ENCODE measurements at regions of chr18 and their contacts with region 1.

Region 1: GRCh38 chr18:7566567-7567473 is at the start of gene PTPRM:
- DNase-seq: peak; percentile 79
- H3K4me3 Mint-ChIP-seq: peak within 1 kb of the TSS; percentile 81
- H3K27ac Mint-ChIP-seq: peak within 1 kb of the TSS; percentile 59
- H3K4me1 Mint-ChIP-seq: peaks cover 35% of the 10 kb centered on the region
- H3K27me3 Mint-ChIP-seq: no peaks in the 10 kb centered on the region
- CTCF ChIP-seq: peak; percentile 45
- total RNA-seq, gene PTPRM: 82.8 and 107 TPM in 2 replicates

Region 2: GRCh38 chr18:7221424-7222155 is 345.2 kb before region 1 on chr18:
- CTCF ChIA-PET with region 1: interaction called, 5 read pairs
- POLR2A ChIA-PET with region 1: interaction called, 3 read pairs
- intact Hi-C with region 1: loop called (anchors 1 kb)
- DNase-seq: peak; percentile 80
- H3K4me3 Mint-ChIP-seq: no peak overlapping the region
- H3K27ac Mint-ChIP-seq: no peak overlapping the region
- H3K4me1 Mint-ChIP-seq: no peaks in the 10 kb centered on the region
- H3K27me3 Mint-ChIP-seq: peaks cover 25% of the 10 kb centered on the region
- CTCF ChIP-seq: peak; percentile 83

Region 3: GRCh38 chr18:7417742-7418141 is 149.1 kb before region 1 on chr18:
- CTCF ChIA-PET with region 1: interaction called, 17 read pairs
- POLR2A ChIA-PET with region 1: interaction called, 20 read pairs
- intact Hi-C with region 1: no loop called
- DNase-seq: peak; percentile 95
- H3K4me3 Mint-ChIP-seq: peak overlapping the region; percentile 9
- H3K27ac Mint-ChIP-seq: peak overlapping the region; percentile 68
- H3K4me1 Mint-ChIP-seq: peaks cover 41% of the 10 kb centered on the region
- H3K27me3 Mint-ChIP-seq: no peaks in the 10 kb centered on the region
- CTCF ChIP-seq: no peak

Region 4: GRCh38 chr18:7429831-7430230 is 137.0 kb before region 1 on chr18:
- CTCF ChIA-PET with region 1: no interaction called
- POLR2A ChIA-PET with region 1: no interaction called
- intact Hi-C with region 1: no loop called
- DNase-seq: no peak
- H3K4me3 Mint-ChIP-seq: no peak overlapping the region
- H3K27ac Mint-ChIP-seq: no peak overlapping the region
- H3K4me1 Mint-ChIP-seq: no peaks in the 10 kb centered on the region
- H3K27me3 Mint-ChIP-seq: no peaks in the 10 kb centered on the region
- CTCF ChIP-seq: no peak

Region 5: GRCh38 chr18:7452331-7452730 is 114.5 kb before region 1 on chr18:
- CTCF ChIA-PET with region 1: interaction called, 7 read pairs
- POLR2A ChIA-PET with region 1: no interaction called
- intact Hi-C with region 1: loop called (anchors 10 kb)
- DNase-seq: peak; percentile 72
- H3K4me3 Mint-ChIP-seq: no peak overlapping the region
- H3K27ac Mint-ChIP-seq: no peak overlapping the region
- H3K4me1 Mint-ChIP-seq: no peaks in the 10 kb centered on the region
- H3K27me3 Mint-ChIP-seq: no peaks in the 10 kb centered on the region
- CTCF ChIP-seq: peak; percentile 53

Region 6: GRCh38 chr18:7946734-7947377 is 380.0 kb after region 1 on chr18:
- CTCF ChIA-PET with region 1: no interaction called
- POLR2A ChIA-PET with region 1: interaction called, 5 read pairs
- intact Hi-C with region 1: loop called (anchors 10 kb)
- DNase-seq: peak; percentile 60
- H3K4me3 Mint-ChIP-seq: peak overlapping the region; percentile 66
- H3K27ac Mint-ChIP-seq: peak overlapping the region; percentile 82
- H3K4me1 Mint-ChIP-seq: peaks cover 54% of the 10 kb centered on the region
- H3K27me3 Mint-ChIP-seq: no peaks in the 10 kb centered on the region
- CTCF ChIP-seq: no peak

Region 7: DNA sequence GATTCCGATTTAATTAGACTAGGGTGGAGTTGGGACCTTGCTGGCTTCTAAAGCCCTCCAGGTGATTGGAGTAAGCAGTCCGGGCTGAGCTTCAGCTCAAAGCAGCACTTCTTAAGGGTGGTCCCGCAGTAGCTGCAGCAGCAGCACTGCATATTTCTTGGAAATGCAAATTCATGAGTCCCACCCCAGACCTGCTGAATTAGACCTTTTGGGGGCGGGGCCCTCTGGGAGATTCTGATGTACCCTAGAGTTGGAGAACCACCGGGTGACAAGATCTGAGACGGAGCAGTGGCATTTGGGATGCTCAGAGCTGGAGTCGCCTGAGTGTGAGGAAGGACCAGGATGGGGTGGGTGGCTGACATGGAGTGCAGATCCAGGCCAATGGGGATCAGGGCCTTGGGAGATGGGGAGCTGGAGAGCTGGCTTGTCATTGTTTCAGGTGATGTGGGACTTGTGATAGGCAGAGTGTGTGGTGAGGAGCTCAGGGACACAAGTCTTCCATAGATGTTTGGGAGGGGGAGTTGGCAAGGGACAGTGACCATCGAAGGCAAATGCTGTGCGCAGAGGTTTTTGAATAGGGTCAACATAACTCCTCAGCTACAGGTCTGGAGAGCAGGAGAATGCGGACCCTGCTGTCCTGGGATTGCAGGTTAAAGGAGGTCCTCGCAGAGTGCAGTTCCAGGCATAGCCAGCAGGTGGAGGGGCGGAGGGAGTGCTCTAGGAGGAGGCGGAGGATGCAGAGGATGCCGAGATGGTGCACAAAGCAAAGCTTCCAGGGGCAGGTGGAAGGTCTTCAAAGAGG is 911.5 kb after region 1 on chr18:
- CTCF ChIA-PET with region 1: interaction called, 4 read pairs
- POLR2A ChIA-PET with region 1: no interaction called
- intact Hi-C with region 1: loop called (anchors 5 kb)
- DNase-seq: peak; percentile 64
- H3K4me3 Mint-ChIP-seq: no peak overlapping the region
- H3K27ac Mint-ChIP-seq: no peak overlapping the region
- H3K4me1 Mint-ChIP-seq: peaks cover 5% of the 10 kb centered on the region
- H3K27me3 Mint-ChIP-seq: peaks cover 45% of the 10 kb centered on the region
- CTCF ChIP-seq: peak; percentile 76